Panc1 (cell line): ENCODE measurements at regions of chr2 and their contacts with region 1.

Region 1: GRCh38 chr2:8430628-8431027 is 251.2 kb upstream of the ID2 start:
- DNase-seq: no peak
- ATAC-seq: no peak
- H3K4me3 ChIP-seq: no peak overlapping the region
- H3K27ac ChIP-seq: no peak overlapping the region
- H3K4me1 ChIP-seq: no peaks in the 10 kb centered on the region
- H3K27me3 ChIP-seq: no peaks in the 10 kb centered on the region
- CTCF ChIP-seq: no peak

Region 2: GRCh38 chr2:8452979-8453903 is 22.6 kb after region 1 on chr2:
- CTCF ChIA-PET with region 1: no interaction called
- POLR2A ChIA-PET with region 1: no interaction called
- in situ Hi-C with region 1: no loop called
- intact Hi-C with region 1: loop called (anchors 1 kb)
- DNase-seq: no peak
- ATAC-seq: no peak
- H3K4me3 ChIP-seq: no peak overlapping the region
- H3K27ac ChIP-seq: no peak overlapping the region
- H3K4me1 ChIP-seq: no peaks in the 10 kb centered on the region; the same call in 1 of the 2 replicates
- H3K27me3 ChIP-seq: peaks cover 3% of the 10 kb centered on the region; the same call in 1 of the 2 replicates
- CTCF ChIP-seq: no peak